Psoas muscle (tissue), 8 donors: ENCODE measurements at regions of chr20 and their contacts with region 1.

Region 1: GRCh38 chr20:23776067-23776771 is 25.5 kb upstream of the CST1 start:
- DNase-seq: no peak
- ATAC-seq: no peak
- H3K4me3 ChIP-seq: no peak overlapping the region
- H3K27ac ChIP-seq: no peak overlapping the region
- H3K4me1 ChIP-seq: no peaks in the 10 kb centered on the region
- H3K27me3 ChIP-seq: peaks cover 0 to 3% (median 0%) of the 10 kb centered on the region in 3 donors
- CTCF ChIP-seq: no peak

Region 2: GRCh38 chr20:23832775-23833508 is 56.7 kb after region 1 on chr20:
- intact Hi-C with region 1: loop called in 1 of 2 experiments (anchors 10 kb)
- DNase-seq: no peak
- ATAC-seq: no peak
- H3K4me3 ChIP-seq: no peak overlapping the region
- H3K27ac ChIP-seq: no peak overlapping the region
- H3K4me1 ChIP-seq: no peaks in the 10 kb centered on the region
- H3K27me3 ChIP-seq: no peaks in the 10 kb centered on the region
- CTCF ChIP-seq: no peak